ENCODE measurements at regions of chr14 and their contacts with region 1.

Region 1: GRCh38 chr14:75278422-75279161 is at the start of gene FOS:
- DNase-seq: peak; percentile 77 to 97 (median 91)
- ATAC-seq: peak; percentile 76 to 88 (median 87)
- H3K4me3 ChIP-seq: peak within 1 kb of the TSS; percentile 77 to 94
- H3K4me3 Mint-ChIP-seq: peak within 1 kb of the TSS; percentile 83 to 95 (median 92)
- H3K27ac ChIP-seq: peak within 1 kb of the TSS; percentile 68
- H3K27ac Mint-ChIP-seq: peak within 1 kb of the TSS; percentile 86 to 96
- H3K4me1 ChIP-seq: peaks cover 26 to 61% of the 10 kb centered on the region in 2 experiments
- H3K4me1 Mint-ChIP-seq: peaks cover 57 to 83% (median 77%) of the 10 kb centered on the region in 3 donors
- H3K27me3 ChIP-seq: peaks cover 0 to 50% of the 10 kb centered on the region in 2 experiments
- H3K27me3 Mint-ChIP-seq: peaks cover 8 to 15% of the 10 kb centered on the region in 2 donors
- total RNA-seq, gene FOS: 20.4 to 2,951 (median 27.1) TPM

Region 2: GRCh38 chr14:75249251-75249957 is 29.2 kb before region 1 on chr14:
- CTCF ChIA-PET with region 1: interaction called in 1 of 2 experiments, 3 read pairs
- POLR2A ChIA-PET with region 1: interaction called, 6 to 52 read pairs
- DNase-seq: peak; percentile 47 to 96 (median 85)
- ATAC-seq: peak; percentile 80 to 89 (median 88)
- H3K4me3 ChIP-seq: peak overlapping the region; percentile 20 to 29
- H3K4me3 Mint-ChIP-seq: peak overlapping the region; percentile 43 to 72 (median 44)
- H3K27ac ChIP-seq: peak overlapping the region; percentile 90
- H3K27ac Mint-ChIP-seq: peak overlapping the region; percentile 85 to 88
- H3K4me1 ChIP-seq: peaks cover 45 to 64% of the 10 kb centered on the region in 2 experiments
- H3K4me1 Mint-ChIP-seq: peaks cover 59 to 68% (median 66%) of the 10 kb centered on the region in 3 donors
- H3K27me3 ChIP-seq: peaks cover 0 to 2% of the 10 kb centered on the region in 2 experiments
- H3K27me3 Mint-ChIP-seq: no peaks in the 10 kb centered on the region

Region 3: DNA sequence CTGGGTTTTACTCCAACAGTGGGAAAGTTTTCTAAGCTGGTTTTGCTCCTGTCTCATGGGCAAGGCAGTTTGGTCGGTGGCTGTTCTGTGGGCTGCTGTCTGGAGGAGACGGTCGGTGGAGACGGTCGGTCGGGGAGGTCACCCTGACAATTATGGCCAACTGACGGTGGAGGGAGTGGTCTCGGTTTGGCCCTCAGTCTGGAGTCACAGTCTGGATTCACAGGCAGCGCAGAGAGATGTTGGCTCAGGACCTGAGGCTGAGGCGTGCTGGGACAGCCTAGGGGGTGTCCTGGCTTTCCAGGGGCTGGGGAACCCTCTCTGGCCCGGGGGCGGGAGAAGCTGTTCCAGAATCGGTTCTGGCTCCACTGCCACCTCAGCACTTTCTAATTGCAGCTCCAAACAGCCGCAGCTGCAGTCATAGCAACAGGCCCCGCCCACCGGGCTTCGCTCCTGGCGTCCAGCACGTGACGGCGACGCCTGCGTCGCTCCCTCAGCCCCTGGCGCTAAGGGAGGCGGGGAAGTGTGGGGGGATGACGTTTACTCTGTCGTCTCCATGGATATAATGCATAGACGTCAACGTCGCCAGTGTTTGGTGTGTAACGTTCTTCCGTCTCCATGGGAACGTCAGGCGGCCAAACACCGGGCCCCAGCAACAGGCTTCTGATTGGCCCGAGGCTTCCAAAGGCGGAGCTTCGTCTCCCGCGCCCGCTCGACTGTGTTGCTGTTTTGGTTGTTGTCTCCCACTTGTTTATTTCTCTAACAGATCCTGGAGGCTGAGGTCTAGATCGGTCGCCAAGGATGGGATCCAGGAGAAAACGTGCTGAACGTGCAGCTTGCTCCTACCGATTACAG is 19.8 kb before region 1 on chr14:
- CTCF ChIA-PET with region 1: interaction called in 1 of 2 experiments, 15 read pairs
- POLR2A ChIA-PET with region 1: interaction called, 8 to 50 read pairs
- DNase-seq: peak; percentile 92 to 100 (median 100)
- ATAC-seq: peak; percentile 91 to 98 (median 96)
- H3K4me3 ChIP-seq: peak overlapping the region; percentile 38 to 47
- H3K4me3 Mint-ChIP-seq: peak overlapping the region; percentile 85 to 87 (median 87)
- H3K27ac ChIP-seq: peak overlapping the region; percentile 95
- H3K27ac Mint-ChIP-seq: peak overlapping the region; percentile 98 to 100
- H3K4me1 ChIP-seq: peaks cover 9 to 23% of the 10 kb centered on the region in 2 experiments
- H3K4me1 Mint-ChIP-seq: peaks cover 29 to 45% (median 38%) of the 10 kb centered on the region in 3 donors
- H3K27me3 ChIP-seq: peaks cover 0 to 8% of the 10 kb centered on the region in 2 experiments
- H3K27me3 Mint-ChIP-seq: no peaks in the 10 kb centered on the region

Measured in T-cell (primary cell).